CD8-positive, alpha-beta T cell (primary cell): ENCODE measurements at regions of chr10 and their contacts with region 1.

Region 1: DNA sequence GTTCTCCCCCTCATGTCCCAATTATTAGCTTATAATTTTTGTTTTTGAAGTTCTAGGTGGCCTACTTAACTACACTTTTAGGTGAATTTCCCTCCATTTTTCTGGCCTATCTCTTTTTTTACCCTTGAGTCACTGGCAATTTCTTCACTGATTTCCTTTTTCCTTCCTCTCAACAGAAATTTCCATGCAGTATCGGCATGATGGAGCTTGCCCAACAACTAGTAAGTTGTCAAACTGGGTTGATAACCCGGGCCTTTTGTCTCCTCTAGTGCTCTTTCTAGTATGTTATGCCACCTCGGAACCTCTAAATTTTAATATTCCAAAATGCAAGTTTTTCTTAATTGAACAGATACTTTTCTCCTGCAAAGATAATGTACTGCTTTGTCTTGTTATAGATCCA is 147.1 kb downstream of the MLLT10 start:
- DNase-seq: no peak
- ATAC-seq: no peak
- H3K4me3 ChIP-seq: no peak overlapping the region
- H3K4me3 Mint-ChIP-seq: no peak overlapping the region
- H3K27ac ChIP-seq: no peak overlapping the region
- H3K27ac Mint-ChIP-seq: no peak overlapping the region
- H3K4me1 ChIP-seq: no peaks in the 10 kb centered on the region
- H3K4me1 Mint-ChIP-seq: peaks cover 15% of the 10 kb centered on the region
- H3K27me3 ChIP-seq: no peaks in the 10 kb centered on the region
- H3K27me3 Mint-ChIP-seq: no peaks in the 10 kb centered on the region
- CTCF ChIP-seq: no peak

Region 2: GRCh38 chr10:21556527-21556926 is 124.6 kb before region 1 on chr10:
- CTCF ChIA-PET with region 1: no interaction called
- POLR2A ChIA-PET with region 1: no interaction called
- intact Hi-C with region 1: loop called in 1 of 2 experiments (anchors 5 kb)
- DNase-seq: no peak
- ATAC-seq: no peak
- H3K4me3 ChIP-seq: no peak overlapping the region
- H3K4me3 Mint-ChIP-seq: no peak overlapping the region
- H3K27ac ChIP-seq: no peak overlapping the region
- H3K27ac Mint-ChIP-seq: no peak overlapping the region
- H3K4me1 ChIP-seq: no peaks in the 10 kb centered on the region
- H3K4me1 Mint-ChIP-seq: peaks cover 39% of the 10 kb centered on the region
- H3K27me3 ChIP-seq: no peaks in the 10 kb centered on the region
- H3K27me3 Mint-ChIP-seq: no peaks in the 10 kb centered on the region
- CTCF ChIP-seq: no peak